CD4-positive, alpha-beta T cell (primary cell): ENCODE measurements at regions of chr14 and their contacts with region 1.

Region 1: DNA sequence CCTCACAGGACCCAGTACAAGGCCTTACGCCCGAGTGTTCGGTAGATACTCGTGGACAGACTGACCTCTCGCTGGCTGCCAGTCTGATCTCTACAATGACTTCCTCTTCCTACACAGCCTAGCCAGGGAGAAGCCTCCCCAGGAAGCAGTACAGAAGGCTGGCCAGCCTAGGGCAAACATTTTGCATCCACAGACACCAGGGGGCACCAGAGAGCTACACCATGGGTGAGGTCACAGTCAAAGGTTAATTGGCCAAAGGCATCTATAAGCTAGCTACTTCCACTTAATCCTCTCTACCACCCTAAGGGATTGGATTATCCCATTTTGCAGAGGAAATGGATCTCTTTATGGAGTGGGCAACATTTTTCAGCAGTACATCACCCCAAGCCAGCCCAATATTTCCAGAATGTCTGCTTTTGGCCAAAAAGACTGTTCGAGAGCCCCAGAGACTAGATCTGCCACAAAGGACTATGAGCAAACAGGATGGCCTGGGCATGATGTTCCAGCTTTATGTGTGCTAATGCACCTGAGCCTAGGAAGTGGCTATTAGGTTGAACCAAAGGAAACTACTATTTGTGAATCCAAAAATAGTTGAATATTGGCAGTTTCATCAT is 14.6 kb upstream of the PNMA1 start:
- DNase-seq: peak; percentile 78 to 95 (median 88)
- ATAC-seq: peak; percentile 93
- H3K4me3 ChIP-seq: no peak overlapping the region
- H3K4me3 Mint-ChIP-seq: peak overlapping the region; percentile 21
- H3K27ac ChIP-seq: peak overlapping the region in 1 of 2 donors; percentile 22
- H3K27ac Mint-ChIP-seq: peak overlapping the region; percentile 84
- H3K4me1 ChIP-seq: peaks cover 36% of the 10 kb centered on the region
- H3K4me1 Mint-ChIP-seq: peaks cover 20% of the 10 kb centered on the region
- H3K27me3 ChIP-seq: no peaks in the 10 kb centered on the region
- H3K27me3 Mint-ChIP-seq: no peaks in the 10 kb centered on the region
- CTCF ChIP-seq: peak; percentile 94

Region 2: GRCh38 chr14:73741386-73741875 is 12.6 kb after region 1 on chr14:
- CTCF ChIA-PET with region 1: interaction called, 17 read pairs
- POLR2A ChIA-PET with region 1: interaction called, 6 read pairs
- intact Hi-C with region 1: no loop called
- DNase-seq: peak in 13 of 14 experiments; percentile 45 to 84 (median 65)
- ATAC-seq: peak; percentile 79
- H3K4me3 ChIP-seq: peak overlapping the region; percentile 36
- H3K4me3 Mint-ChIP-seq: peak overlapping the region; percentile 87
- H3K27ac ChIP-seq: peak overlapping the region; percentile 76 to 78
- H3K27ac Mint-ChIP-seq: peak overlapping the region; percentile 99
- H3K4me1 ChIP-seq: peaks cover 83% of the 10 kb centered on the region
- H3K4me1 Mint-ChIP-seq: peaks cover 65% of the 10 kb centered on the region
- H3K27me3 ChIP-seq: no peaks in the 10 kb centered on the region
- H3K27me3 Mint-ChIP-seq: no peaks in the 10 kb centered on the region
- CTCF ChIP-seq: no peak

Region 3: GRCh38 chr14:73759714-73760597 is 31.1 kb after region 1 on chr14:
- CTCF ChIA-PET with region 1: interaction called, 30 read pairs
- POLR2A ChIA-PET with region 1: interaction called, 25 read pairs
- intact Hi-C with region 1: loop called in 1 of 2 experiments (anchors 1 kb)
- DNase-seq: peak; percentile 89 to 98 (median 94)
- ATAC-seq: peak; percentile 75
- H3K4me3 ChIP-seq: peak overlapping the region; percentile 63
- H3K4me3 Mint-ChIP-seq: peak overlapping the region; percentile 93
- H3K27ac ChIP-seq: peak overlapping the region; percentile 94 to 97
- H3K27ac Mint-ChIP-seq: peak overlapping the region; percentile 97
- H3K4me1 ChIP-seq: peaks cover 82% of the 10 kb centered on the region
- H3K4me1 Mint-ChIP-seq: peaks cover 86% of the 10 kb centered on the region
- H3K27me3 ChIP-seq: no peaks in the 10 kb centered on the region
- H3K27me3 Mint-ChIP-seq: no peaks in the 10 kb centered on the region
- CTCF ChIP-seq: no peak

Region 4: GRCh38 chr14:73785873-73786695 is 57.3 kb after region 1 on chr14:
- CTCF ChIA-PET with region 1: interaction called, 17 read pairs
- POLR2A ChIA-PET with region 1: interaction called, 10 read pairs
- intact Hi-C with region 1: loop called in 1 of 2 experiments (anchors 2 kb)
- DNase-seq: peak; percentile 51 to 84 (median 58)
- ATAC-seq: peak; percentile 70
- H3K4me3 ChIP-seq: peak overlapping the region; percentile 79
- H3K4me3 Mint-ChIP-seq: peak overlapping the region; percentile 96
- H3K27ac ChIP-seq: peak overlapping the region; percentile 67 to 76
- H3K27ac Mint-ChIP-seq: peak overlapping the region; percentile 96
- H3K4me1 ChIP-seq: peaks cover 67% of the 10 kb centered on the region
- H3K4me1 Mint-ChIP-seq: peaks cover 62% of the 10 kb centered on the region
- H3K27me3 ChIP-seq: no peaks in the 10 kb centered on the region
- H3K27me3 Mint-ChIP-seq: no peaks in the 10 kb centered on the region
- CTCF ChIP-seq: no peak

Region 5: DNA sequence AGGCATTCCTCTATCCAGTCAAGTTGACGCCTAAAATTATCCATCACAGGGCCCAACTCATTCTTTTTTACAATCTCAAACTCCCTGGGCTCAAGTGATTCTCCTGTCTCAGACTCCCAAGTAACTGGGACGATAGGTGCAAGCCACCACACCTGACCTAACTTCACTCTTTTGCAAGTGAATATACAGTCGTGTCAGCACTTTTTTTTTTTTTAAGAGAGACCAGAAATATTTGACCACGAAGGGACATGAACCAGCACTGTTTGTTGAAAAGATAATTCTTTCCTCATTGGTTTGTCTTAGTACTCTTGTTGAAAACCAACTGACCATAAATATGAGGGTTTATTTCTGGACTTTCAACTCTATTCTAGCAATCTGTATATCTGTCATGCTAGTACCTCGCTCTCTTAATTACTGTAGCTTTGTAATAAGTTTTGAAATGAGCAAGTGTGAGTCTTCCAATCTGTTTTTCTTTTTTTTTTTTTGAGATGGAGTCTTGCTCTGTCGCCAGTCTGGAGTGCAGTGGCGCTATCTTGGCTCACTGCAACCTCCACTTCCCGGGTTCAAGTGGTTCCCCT is 136.8 kb after region 1 on chr14:
- CTCF ChIA-PET with region 1: no interaction called
- POLR2A ChIA-PET with region 1: no interaction called
- intact Hi-C with region 1: loop called in 1 of 2 experiments (anchors 2 kb)
- DNase-seq: no peak
- ATAC-seq: no peak
- H3K4me3 ChIP-seq: no peak overlapping the region
- H3K4me3 Mint-ChIP-seq: no peak overlapping the region
- H3K27ac ChIP-seq: no peak overlapping the region
- H3K27ac Mint-ChIP-seq: no peak overlapping the region
- H3K4me1 ChIP-seq: no peaks in the 10 kb centered on the region
- H3K4me1 Mint-ChIP-seq: no peaks in the 10 kb centered on the region
- H3K27me3 ChIP-seq: no peaks in the 10 kb centered on the region
- H3K27me3 Mint-ChIP-seq: no peaks in the 10 kb centered on the region
- CTCF ChIP-seq: no peak

Region 6: DNA sequence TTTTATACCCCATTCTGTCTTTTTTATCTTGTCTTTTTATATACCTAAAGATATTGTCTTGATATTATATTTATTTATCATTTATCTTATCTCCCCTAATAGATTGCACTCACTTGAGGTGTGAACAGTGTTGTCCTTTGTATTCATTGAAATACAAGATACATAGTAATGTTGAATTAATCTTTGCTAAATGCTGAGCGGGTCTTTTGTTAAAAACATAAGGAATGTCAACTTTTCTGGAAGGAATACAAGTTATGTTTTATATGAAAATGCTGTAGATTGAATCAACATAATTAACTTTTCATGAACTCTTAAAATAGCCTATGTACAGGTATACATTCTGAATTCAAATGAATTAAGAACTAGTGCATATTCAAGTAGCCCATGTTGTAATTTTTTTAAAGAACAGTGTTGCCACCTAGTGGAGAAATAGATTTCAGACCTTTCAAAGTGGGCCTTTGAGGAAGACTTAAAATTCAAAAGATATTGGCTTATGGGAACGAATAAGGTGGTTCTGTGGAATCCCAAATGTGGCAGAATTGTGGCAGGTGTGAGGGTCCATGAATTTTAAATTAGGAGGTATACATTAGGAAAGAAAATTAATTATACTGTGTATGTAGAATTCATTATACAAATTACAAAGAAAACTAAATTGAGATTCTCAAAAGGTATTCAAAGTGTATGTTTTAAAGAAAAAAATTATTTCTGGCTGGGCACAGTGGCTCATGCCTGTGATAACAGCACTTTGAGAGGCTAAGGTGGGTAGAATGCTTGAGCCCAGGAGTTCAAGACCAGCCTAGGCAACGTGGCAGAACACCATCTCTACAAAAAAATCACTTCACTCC is 309.4 kb after region 1 on chr14:
- CTCF ChIA-PET with region 1: no interaction called
- POLR2A ChIA-PET with region 1: no interaction called
- intact Hi-C with region 1: loop called in 1 of 2 experiments (anchors 5 kb)
- DNase-seq: peak in 4 of 14 experiments; percentile 6 to 69 (median 66)
- ATAC-seq: peak; percentile 51
- H3K4me3 ChIP-seq: no peak overlapping the region
- H3K4me3 Mint-ChIP-seq: no peak overlapping the region
- H3K27ac ChIP-seq: no peak overlapping the region
- H3K27ac Mint-ChIP-seq: no peak overlapping the region
- H3K4me1 ChIP-seq: no peaks in the 10 kb centered on the region
- H3K4me1 Mint-ChIP-seq: no peaks in the 10 kb centered on the region
- H3K27me3 ChIP-seq: no peaks in the 10 kb centered on the region
- H3K27me3 Mint-ChIP-seq: no peaks in the 10 kb centered on the region
- CTCF ChIP-seq: peak; percentile 87